HepG2 (cell line): ENCODE measurements at regions of chr11 and their contacts with region 1.

Region 1: GRCh38 chr11:126146433-126147192 is 64.8 kb downstream of the RPUSD4 start:
- DNase-seq: peak; percentile 84
- ATAC-seq: peak; percentile 65
- H3K4me3 ChIP-seq: peak overlapping the region; percentile 46 to 83 (median 55)
- H3K27ac ChIP-seq: peak overlapping the region; percentile 88
- H3K4me1 ChIP-seq: peaks cover 78% of the 10 kb centered on the region
- H3K27me3 ChIP-seq: no peaks in the 10 kb centered on the region
- CTCF ChIP-seq: no peak
- EP300 ChIP-seq: no peak
- POLR2A ChIP-seq: peak in 1 of 2 experiments; percentile 37; a peak in 1 of 4 replicates
- RAD21 ChIP-seq: no peak

Region 2: DNA sequence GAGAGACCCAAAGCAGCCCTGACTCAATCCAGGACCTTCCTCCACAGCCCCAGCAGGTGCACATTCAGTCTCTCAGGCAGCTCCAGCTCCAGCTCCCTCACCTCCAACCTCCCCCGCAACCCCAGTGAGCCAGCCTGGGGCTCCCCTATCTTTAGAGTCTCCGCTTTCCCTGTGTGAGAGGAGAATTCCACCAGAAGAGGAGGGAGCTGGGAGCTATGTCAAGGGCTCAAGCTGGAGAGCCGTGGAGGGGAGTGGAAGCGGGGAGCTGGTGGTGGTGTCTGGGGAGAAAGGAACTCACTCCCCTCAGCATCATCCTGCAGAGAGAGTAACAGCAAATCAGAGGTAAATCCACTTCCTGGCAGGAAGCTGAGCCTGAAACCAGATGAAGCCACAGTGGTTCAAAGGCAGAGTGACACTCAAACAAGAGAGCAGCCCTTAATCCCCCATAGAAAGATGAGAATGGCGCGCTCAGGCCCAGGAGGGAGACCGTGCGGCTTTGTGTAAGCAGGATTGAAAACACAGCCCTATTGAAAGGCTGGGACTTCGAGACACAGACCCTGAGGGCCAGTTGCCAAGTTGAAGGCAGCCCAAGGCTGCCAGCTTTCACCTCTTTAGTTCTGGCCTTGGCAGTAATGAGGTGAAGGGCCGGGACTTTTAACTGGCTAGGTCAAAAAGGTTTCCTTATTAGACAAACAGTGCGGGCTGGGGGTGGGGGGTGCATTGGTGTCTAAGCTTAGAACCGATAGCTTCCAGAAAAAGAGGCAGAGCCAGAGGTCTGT is 62.6 kb before region 1 on chr11:
- CTCF ChIA-PET with region 1: no interaction called
- POLR2A ChIA-PET with region 1: interaction called, 10 read pairs
- in situ Hi-C with region 1: no loop called
- intact Hi-C with region 1: loop called (anchors 1 kb)
- DNase-seq: no peak
- ATAC-seq: peak; percentile 48
- H3K4me3 ChIP-seq: peak overlapping the region; percentile 11 to 57 (median 41); a peak in 4 of 6 replicates
- H3K27ac ChIP-seq: peak overlapping the region; percentile 29
- H3K4me1 ChIP-seq: peaks cover 87% of the 10 kb centered on the region
- H3K27me3 ChIP-seq: no peaks in the 10 kb centered on the region; a peak in 1 of 5 replicates
- CTCF ChIP-seq: no peak
- EP300 ChIP-seq: no peak
- POLR2A ChIP-seq: no peak
- RAD21 ChIP-seq: no peak

Region 3: GRCh38 chr11:126163074-126163700 is 16.6 kb after region 1 on chr11:
- CTCF ChIA-PET with region 1: no interaction called
- POLR2A ChIA-PET with region 1: interaction called, 104 read pairs
- in situ Hi-C with region 1: no loop called
- intact Hi-C with region 1: no loop called
- DNase-seq: peak; percentile 68
- ATAC-seq: peak; percentile 46
- H3K4me3 ChIP-seq: peak overlapping the region in 2 of 3 experiments; percentile 39 to 48; a peak in 4 of 6 replicates
- H3K27ac ChIP-seq: peak overlapping the region; percentile 58
- H3K4me1 ChIP-seq: peaks cover 95% of the 10 kb centered on the region
- H3K27me3 ChIP-seq: peaks cover 0 to 1% of the 10 kb centered on the region in 2 experiments; a peak in 1 of 5 replicates
- CTCF ChIP-seq: no peak
- EP300 ChIP-seq: peak in 1 of 2 experiments; percentile 76; a peak in 2 of 4 replicates
- POLR2A ChIP-seq: no peak
- RAD21 ChIP-seq: no peak

Region 4: DNA sequence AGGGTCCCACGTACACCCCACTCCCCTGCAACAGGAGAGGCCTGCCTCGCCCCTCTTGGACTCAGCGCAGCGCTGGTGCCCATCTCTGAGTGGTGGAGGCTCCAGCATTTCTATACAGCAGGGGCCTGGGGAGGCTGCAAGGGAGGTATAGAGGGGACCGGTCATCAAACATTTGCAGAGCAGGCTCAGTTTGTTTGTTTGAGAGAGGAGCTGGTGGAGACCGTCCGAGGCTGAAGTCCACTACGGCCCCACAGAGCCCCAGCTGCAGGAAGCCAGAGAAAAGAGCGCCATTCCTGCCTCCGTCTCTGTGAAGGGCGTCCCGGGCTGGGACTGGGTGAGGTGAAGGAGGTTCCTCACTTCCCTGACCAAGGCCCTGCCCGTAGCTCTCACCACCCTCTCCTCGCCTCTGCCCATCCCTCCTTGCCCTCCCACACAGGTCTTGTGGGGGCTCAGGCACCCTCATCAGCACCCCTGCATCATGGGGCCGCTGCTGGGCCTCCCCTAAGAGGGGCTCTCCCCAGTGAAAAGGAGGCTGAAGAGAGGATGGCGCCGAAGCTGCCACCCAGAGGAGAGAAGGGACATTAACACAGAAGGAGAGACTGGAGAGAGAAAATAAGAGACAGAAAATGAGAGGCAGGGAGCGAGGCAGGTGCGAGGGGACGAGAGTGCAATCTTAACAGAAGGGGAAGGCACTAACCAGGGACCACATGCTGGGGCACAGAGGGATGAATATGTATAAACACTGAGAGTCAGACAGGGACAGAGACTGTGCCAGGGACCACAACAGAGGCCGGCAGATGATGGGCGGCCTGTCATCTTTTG is 40.3 kb after region 1 on chr11:
- CTCF ChIA-PET with region 1: no interaction called
- POLR2A ChIA-PET with region 1: interaction called, 87 read pairs
- in situ Hi-C with region 1: no loop called
- intact Hi-C with region 1: loop called (anchors 1 kb)
- DNase-seq: peak; percentile 87
- ATAC-seq: peak; percentile 82
- H3K4me3 ChIP-seq: peak overlapping the region; percentile 25 to 60 (median 37); a peak in 4 of 6 replicates
- H3K27ac ChIP-seq: peak overlapping the region; percentile 94
- H3K4me1 ChIP-seq: peaks cover 96% of the 10 kb centered on the region
- H3K27me3 ChIP-seq: no peaks in the 10 kb centered on the region
- CTCF ChIP-seq: peak; percentile 52
- EP300 ChIP-seq: peak in 1 of 2 experiments; percentile 74; a peak in 2 of 4 replicates
- POLR2A ChIP-seq: peak in 1 of 2 experiments; percentile 59; a peak in 2 of 4 replicates
- RAD21 ChIP-seq: peak; percentile 63

Region 5: DNA sequence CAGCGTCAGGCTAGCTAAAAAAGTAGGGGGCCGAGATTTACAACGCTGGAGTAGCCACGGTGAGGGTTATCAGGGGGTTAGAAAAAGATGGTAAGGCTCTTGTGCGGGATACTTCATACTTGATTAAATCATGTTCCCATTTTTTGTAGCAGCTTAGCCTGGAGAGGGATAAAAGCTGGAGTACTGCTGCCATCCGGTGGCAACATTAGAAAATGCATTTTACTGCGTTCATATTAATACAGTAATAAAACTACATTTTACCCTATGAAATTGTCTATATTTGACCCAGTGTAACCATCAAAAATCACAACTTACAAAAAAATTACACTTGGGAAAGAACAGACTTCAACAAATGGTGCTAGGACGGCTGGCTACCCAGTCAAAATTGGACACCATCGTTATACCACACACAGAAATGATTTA is 47.5 kb after region 1 on chr11:
- CTCF ChIA-PET with region 1: no interaction called
- POLR2A ChIA-PET with region 1: interaction called, 87 read pairs
- in situ Hi-C with region 1: no loop called
- intact Hi-C with region 1: no loop called
- DNase-seq: peak; percentile 44
- ATAC-seq: no peak
- H3K4me3 ChIP-seq: no peak overlapping the region
- H3K27ac ChIP-seq: peak overlapping the region; percentile 52
- H3K4me1 ChIP-seq: peaks cover 51% of the 10 kb centered on the region
- H3K27me3 ChIP-seq: no peaks in the 10 kb centered on the region
- CTCF ChIP-seq: peak; percentile 79
- EP300 ChIP-seq: no peak
- POLR2A ChIP-seq: no peak
- RAD21 ChIP-seq: peak; percentile 88

Region 6: GRCh38 chr11:126366065-126366785 is 219.6 kb after region 1 on chr11:
- CTCF ChIA-PET with region 1: no interaction called
- POLR2A ChIA-PET with region 1: no interaction called
- in situ Hi-C with region 1: no loop called
- intact Hi-C with region 1: no loop called
- DNase-seq: no peak
- ATAC-seq: no peak; the same call in 1 of the 3 replicates
- H3K4me3 ChIP-seq: no peak overlapping the region
- H3K27ac ChIP-seq: no peak overlapping the region
- H3K4me1 ChIP-seq: no peaks in the 10 kb centered on the region
- H3K27me3 ChIP-seq: no peaks in the 10 kb centered on the region
- CTCF ChIP-seq: no peak
- EP300 ChIP-seq: no peak
- POLR2A ChIP-seq: no peak
- RAD21 ChIP-seq: no peak